Mucosa of descending colon (tissue), 3 donors: ENCODE measurements at regions of chr17 and their contacts with region 1.

Region 1: DNA sequence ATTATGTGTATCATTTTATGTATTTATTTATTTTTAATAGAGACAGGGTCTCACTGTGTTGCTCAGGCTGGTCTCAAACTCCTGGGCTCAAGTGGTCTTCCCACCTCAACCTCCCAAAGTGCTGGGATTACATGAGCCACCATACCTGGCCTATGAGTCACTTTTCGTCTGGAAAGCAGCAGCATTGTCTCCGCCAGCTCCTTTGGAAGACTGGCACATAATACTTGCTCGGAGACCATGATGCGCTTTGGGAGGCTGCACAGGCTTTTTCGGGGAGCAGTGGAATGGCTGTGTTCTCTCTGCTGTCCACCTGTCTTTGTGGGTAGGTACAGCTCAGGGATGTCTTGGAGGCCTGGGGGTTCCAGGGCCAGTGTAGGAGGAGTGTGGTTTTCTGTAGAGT is 102.2 kb downstream of the AATF start:
- DNase-seq: no peak
- ATAC-seq: no peak
- H3K4me3 ChIP-seq: no peak overlapping the region
- H3K4me1 ChIP-seq: peaks cover 4% of the 10 kb centered on the region
- CTCF ChIP-seq: no peak

Region 2: DNA sequence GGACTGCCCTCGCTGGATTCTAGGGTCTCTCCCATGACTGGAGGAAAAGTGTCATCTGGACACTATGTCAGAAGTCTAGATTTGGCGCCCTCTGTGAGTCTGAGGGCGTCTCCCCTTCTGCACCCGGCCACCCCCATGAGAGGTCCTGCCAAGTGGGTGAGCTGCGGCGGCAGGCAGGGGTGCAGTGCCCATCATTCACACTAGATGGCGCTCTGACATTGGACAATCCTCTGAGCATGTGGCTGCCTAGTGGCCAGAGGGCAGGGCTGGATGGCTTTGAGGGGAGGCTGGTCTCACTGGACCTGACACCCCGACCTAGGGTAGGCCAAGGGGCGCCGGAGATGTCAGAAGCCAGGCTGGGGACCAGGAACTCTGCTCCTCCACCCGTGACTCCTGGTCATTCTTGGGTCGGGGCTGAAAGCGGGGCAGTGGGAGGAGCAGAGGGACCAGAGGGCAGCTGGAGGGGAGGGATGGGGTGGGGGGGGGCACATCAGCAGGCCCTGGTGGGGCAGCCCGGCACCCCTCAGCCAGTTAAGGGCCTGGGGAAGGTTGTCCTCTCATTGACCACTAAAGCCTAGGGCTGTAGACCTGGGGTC is 421.6 kb before region 1 on chr17:
- intact Hi-C with region 1: loop called in 1 of 2 experiments (anchors 10 kb)
- DNase-seq: peak; percentile 67 to 89 (median 84)
- ATAC-seq: peak; percentile 96
- H3K4me3 ChIP-seq: no peak overlapping the region
- H3K4me1 ChIP-seq: no peaks in the 10 kb centered on the region
- CTCF ChIP-seq: peak; percentile 98

Region 3: GRCh38 chr17:36948717-36949460 is 102.0 kb before region 1 on chr17 and contains the start of gene AATF:
- intact Hi-C with region 1: no loop called
- DNase-seq: peak; percentile 98
- ATAC-seq: peak; percentile 99
- H3K4me3 ChIP-seq: peak within 1 kb of the TSS; percentile 78
- H3K4me1 ChIP-seq: peaks cover 8% of the 10 kb centered on the region
- CTCF ChIP-seq: no peak
- total RNA-seq, gene AATF: 35.6 to 47.2 (median 37.9) TPM